Calu3 (cell line): ENCODE measurements at regions of chrX and their contacts with region 1.

Region 1: GRCh38 chrX:110284159-110284558 is 33.7 kb downstream of the AMMECR1 start:
- DNase-seq: no peak
- H3K4me3 Mint-ChIP-seq: no peak overlapping the region
- H3K27ac Mint-ChIP-seq: peak overlapping the region; percentile 60
- H3K4me1 Mint-ChIP-seq: peaks cover 39% of the 10 kb centered on the region
- H3K27me3 Mint-ChIP-seq: no peaks in the 10 kb centered on the region
- CTCF ChIP-seq: no peak

Region 2: DNA sequence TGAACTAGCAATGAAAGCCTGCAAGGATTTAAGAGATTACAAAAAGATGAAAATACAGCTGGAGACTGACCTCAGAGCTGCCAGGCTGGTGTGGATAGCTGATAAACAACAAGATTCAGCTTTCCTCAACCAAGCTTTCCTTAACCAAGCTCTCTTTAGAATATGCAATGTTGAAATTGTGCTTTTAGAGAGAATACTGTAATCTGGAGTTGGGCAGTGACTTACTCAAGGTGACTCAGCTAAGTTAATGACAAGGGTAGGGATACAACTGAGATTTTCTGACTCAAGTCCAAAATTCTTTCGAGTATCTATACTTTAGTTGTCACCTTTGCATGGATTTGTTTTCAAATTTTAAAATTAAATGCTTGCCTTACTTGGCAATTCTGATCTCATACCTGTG is 64.2 kb before region 1 on chrX:
- CTCF ChIA-PET with region 1: no interaction called
- intact Hi-C with region 1: loop called (anchors 5 kb)
- DNase-seq: no peak
- H3K4me3 Mint-ChIP-seq: no peak overlapping the region
- H3K27ac Mint-ChIP-seq: no peak overlapping the region
- H3K4me1 Mint-ChIP-seq: peaks cover 22% of the 10 kb centered on the region
- H3K27me3 Mint-ChIP-seq: no peaks in the 10 kb centered on the region
- CTCF ChIP-seq: no peak

Region 3: GRCh38 chrX:110241816-110242215 is 42.3 kb before region 1 on chrX:
- CTCF ChIA-PET with region 1: no interaction called
- intact Hi-C with region 1: loop called (anchors 5 kb)
- DNase-seq: no peak
- H3K4me3 Mint-ChIP-seq: no peak overlapping the region
- H3K27ac Mint-ChIP-seq: no peak overlapping the region
- H3K4me1 Mint-ChIP-seq: peaks cover 64% of the 10 kb centered on the region
- H3K27me3 Mint-ChIP-seq: no peaks in the 10 kb centered on the region
- CTCF ChIP-seq: no peak

Region 4: DNA sequence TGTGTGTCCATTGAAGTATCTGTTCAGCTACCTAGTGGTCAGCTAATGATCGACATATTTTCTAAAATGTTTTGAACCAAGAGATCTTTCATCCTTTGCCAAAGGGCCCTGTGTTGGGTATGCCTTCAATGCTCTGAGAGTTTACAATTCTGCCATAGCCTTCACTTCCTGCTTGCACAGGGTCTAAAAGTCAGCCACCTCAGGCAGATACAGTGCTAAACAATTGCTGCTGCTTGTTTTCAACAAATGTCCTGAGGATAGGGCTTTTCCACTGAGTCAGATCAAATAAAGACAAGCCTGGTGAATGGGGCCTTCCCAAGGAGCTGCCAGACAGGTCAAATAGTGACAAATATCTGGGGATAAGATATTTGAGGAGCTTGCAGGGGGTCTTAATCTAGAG is 17.0 kb after region 1 on chrX:
- CTCF ChIA-PET with region 1: no interaction called
- intact Hi-C with region 1: no loop called
- DNase-seq: no peak
- H3K4me3 Mint-ChIP-seq: no peak overlapping the region
- H3K27ac Mint-ChIP-seq: no peak overlapping the region
- H3K4me1 Mint-ChIP-seq: peaks cover 9% of the 10 kb centered on the region
- H3K27me3 Mint-ChIP-seq: no peaks in the 10 kb centered on the region
- CTCF ChIP-seq: no peak

Region 5: GRCh38 chrX:110531873-110532580 is 247.9 kb after region 1 on chrX:
- CTCF ChIA-PET with region 1: no interaction called
- intact Hi-C with region 1: no loop called
- DNase-seq: no peak
- H3K4me3 Mint-ChIP-seq: no peak overlapping the region
- H3K27ac Mint-ChIP-seq: no peak overlapping the region
- H3K4me1 Mint-ChIP-seq: no peaks in the 10 kb centered on the region
- H3K27me3 Mint-ChIP-seq: no peaks in the 10 kb centered on the region
- CTCF ChIP-seq: no peak